SK-N-SH (cell line): ENCODE measurements at regions of chr15 and their contacts with region 1.

Region 1: GRCh38 chr15:99704444-99704838 is 28.8 kb downstream of the LYSMD4 start:
- DNase-seq: peak; percentile 65
- H3K4me3 ChIP-seq: no peak overlapping the region; a peak in 1 of 4 replicates
- H3K27ac ChIP-seq: peak overlapping the region in 1 of 2 experiments; percentile 80; a peak in 2 of 4 replicates
- H3K4me1 ChIP-seq: peaks cover 19 to 33% of the 10 kb centered on the region in 2 experiments
- H3K27me3 ChIP-seq: no peaks in the 10 kb centered on the region
- CTCF ChIP-seq: peak; percentile 77
- EP300 ChIP-seq: no peak
- RAD21 ChIP-seq: peak; percentile 91

Region 2: DNA sequence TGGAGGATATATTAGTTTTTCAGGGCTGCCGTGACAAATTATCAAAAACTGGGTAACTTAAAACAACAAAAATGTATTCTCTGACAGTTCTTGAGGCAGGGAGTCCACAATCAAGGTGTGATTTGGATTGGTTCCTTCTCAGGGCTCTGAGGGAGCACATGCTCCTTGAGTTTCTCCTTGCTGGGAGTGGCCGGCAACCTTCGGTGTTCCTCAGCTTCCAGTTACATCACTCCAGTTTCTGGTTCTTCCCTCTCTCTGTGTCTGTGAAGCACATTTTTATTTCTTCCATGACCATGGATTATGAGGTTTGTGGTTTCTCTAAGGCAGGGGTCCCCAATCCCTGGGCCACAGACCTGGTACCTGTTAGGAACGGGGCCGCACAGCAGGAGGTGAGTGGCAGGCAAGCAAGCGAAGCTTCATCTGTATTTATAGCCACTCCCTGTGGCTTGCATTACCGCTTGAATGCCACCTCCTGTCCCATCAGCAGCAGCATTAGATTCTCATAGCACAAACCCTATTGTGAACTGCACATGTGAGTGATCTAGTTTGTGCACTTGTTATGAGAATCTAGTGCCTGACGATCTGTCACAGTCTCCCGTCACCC is 428.8 kb before region 1 on chr15:
- CTCF ChIA-PET with region 1: interaction called, 132 read pairs
- POLR2A ChIA-PET with region 1: no interaction called
- DNase-seq: no peak
- H3K4me3 ChIP-seq: no peak overlapping the region
- H3K27ac ChIP-seq: no peak overlapping the region
- H3K4me1 ChIP-seq: no peaks in the 10 kb centered on the region; a peak in 1 of 4 replicates
- H3K27me3 ChIP-seq: no peaks in the 10 kb centered on the region
- CTCF ChIP-seq: no peak
- EP300 ChIP-seq: no peak
- RAD21 ChIP-seq: no peak

Region 3: DNA sequence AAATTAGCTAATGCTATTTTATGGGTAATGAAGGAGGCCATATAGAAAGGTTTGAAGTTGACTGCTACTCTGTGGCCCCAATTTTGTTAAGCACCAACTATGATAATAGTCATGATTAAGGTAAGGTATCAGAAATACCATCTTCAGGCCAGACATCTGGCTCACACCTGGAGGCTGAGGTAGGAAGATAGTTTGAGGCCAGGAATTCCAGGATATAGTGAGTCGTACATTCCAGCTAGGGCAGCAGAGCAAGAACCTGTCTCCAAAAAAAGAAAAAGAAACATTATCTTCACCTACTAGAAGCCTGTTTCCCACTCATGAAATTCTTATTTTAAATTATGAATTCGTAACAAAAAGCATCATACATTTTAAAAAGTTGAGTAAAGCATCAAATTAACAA is 388.8 kb before region 1 on chr15:
- CTCF ChIA-PET with region 1: interaction called, 12 read pairs
- POLR2A ChIA-PET with region 1: no interaction called
- DNase-seq: no peak
- H3K4me3 ChIP-seq: no peak overlapping the region
- H3K27ac ChIP-seq: no peak overlapping the region
- H3K4me1 ChIP-seq: no peaks in the 10 kb centered on the region
- H3K27me3 ChIP-seq: no peaks in the 10 kb centered on the region
- CTCF ChIP-seq: no peak
- EP300 ChIP-seq: no peak
- RAD21 ChIP-seq: no peak

Region 4: GRCh38 chr15:99409097-99409473 is 295.4 kb before region 1 on chr15:
- CTCF ChIA-PET with region 1: interaction called, 37 read pairs
- POLR2A ChIA-PET with region 1: no interaction called
- DNase-seq: peak; percentile 70
- H3K4me3 ChIP-seq: no peak overlapping the region; a peak in 1 of 4 replicates
- H3K27ac ChIP-seq: peak overlapping the region; percentile 8 to 32; a peak in 1 of 4 replicates
- H3K4me1 ChIP-seq: peaks cover 5 to 18% of the 10 kb centered on the region in 2 experiments
- H3K27me3 ChIP-seq: no peaks in the 10 kb centered on the region
- CTCF ChIP-seq: peak; percentile 51
- EP300 ChIP-seq: no peak
- RAD21 ChIP-seq: peak; percentile 60

Region 5: DNA sequence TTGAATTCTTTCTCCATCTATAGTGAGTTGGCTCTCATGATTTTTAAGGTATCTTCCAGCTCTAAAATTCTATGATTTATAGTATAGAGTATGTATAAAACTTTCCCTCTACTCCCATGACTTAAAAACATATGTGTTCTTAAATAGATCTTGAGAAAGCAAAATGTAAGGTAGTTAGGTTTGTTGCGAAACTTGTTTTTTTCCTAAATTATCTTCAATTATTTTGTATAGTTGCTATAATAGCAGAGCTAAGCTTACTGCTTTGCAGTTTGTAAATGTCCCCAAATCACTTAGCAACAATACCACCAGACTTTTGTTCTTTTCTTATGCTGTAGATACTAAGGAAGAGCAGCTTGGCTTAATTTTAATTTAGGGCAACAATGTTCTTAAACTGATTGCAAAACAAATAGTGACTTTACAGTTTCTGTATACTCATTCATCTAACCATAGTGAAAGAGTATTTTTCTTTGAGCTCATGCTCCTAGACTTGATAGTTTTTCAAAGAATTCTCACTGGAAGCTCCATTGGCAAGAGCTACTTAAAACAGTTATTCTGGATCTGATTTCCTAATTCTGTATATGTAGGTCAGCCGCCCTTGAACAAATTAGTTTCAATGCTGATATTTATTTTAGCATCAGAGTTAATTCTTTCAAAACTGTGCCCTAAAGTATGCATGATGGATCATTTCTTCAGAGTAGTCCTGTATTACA is 32.4 kb before region 1 on chr15:
- CTCF ChIA-PET with region 1: interaction called, 15 read pairs
- POLR2A ChIA-PET with region 1: no interaction called
- DNase-seq: no peak
- H3K4me3 ChIP-seq: no peak overlapping the region
- H3K27ac ChIP-seq: no peak overlapping the region
- H3K4me1 ChIP-seq: no peaks in the 10 kb centered on the region
- H3K27me3 ChIP-seq: no peaks in the 10 kb centered on the region
- CTCF ChIP-seq: no peak
- EP300 ChIP-seq: no peak
- RAD21 ChIP-seq: no peak

Region 6: DNA sequence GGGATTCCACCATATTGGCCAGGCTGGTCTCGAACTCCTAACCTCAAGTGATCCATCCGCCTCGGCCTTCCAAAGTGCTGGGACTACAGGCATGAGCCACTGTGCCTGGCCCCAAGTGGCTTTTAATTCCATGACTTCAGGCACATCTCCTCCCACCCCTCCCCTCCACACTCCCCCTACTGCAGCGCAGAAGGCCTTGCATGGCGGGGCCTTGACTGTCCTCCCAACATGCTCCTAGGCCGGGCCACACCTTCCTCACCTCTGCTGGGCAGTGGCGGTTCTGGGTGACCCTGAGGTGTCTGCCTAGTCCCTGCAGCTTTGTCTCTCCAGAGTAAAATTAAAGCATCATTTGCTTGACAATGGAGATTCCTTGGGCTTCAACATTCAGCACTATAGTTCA is 21.9 kb after region 1 on chr15:
- CTCF ChIA-PET with region 1: interaction called, 28 read pairs
- POLR2A ChIA-PET with region 1: no interaction called
- DNase-seq: no peak
- H3K4me3 ChIP-seq: no peak overlapping the region
- H3K27ac ChIP-seq: no peak overlapping the region
- H3K4me1 ChIP-seq: peaks cover 0 to 7% of the 10 kb centered on the region in 2 experiments; a peak in 1 of 4 replicates
- H3K27me3 ChIP-seq: no peaks in the 10 kb centered on the region
- CTCF ChIP-seq: no peak
- EP300 ChIP-seq: no peak
- RAD21 ChIP-seq: no peak

Region 7: GRCh38 chr15:99967841-99968371 is 263.5 kb after region 1 on chr15:
- CTCF ChIA-PET with region 1: no interaction called
- POLR2A ChIA-PET with region 1: no interaction called
- DNase-seq: no peak
- H3K4me3 ChIP-seq: no peak overlapping the region
- H3K27ac ChIP-seq: no peak overlapping the region
- H3K4me1 ChIP-seq: no peaks in the 10 kb centered on the region; a peak in 1 of 4 replicates
- H3K27me3 ChIP-seq: no peaks in the 10 kb centered on the region
- CTCF ChIP-seq: no peak
- EP300 ChIP-seq: no peak
- RAD21 ChIP-seq: no peak